T-cell (primary cell): ENCODE measurements at regions of chr7 and their contacts with region 1.

Region 1: GRCh38 chr7:130010689-130011412 is 40.3 kb downstream of the ZC3HC1 start:
- DNase-seq: peak; percentile 62 to 92 (median 80)
- ATAC-seq: peak; percentile 67 to 84 (median 75)
- H3K4me3 ChIP-seq: no peak overlapping the region
- H3K4me3 Mint-ChIP-seq: no peak overlapping the region
- H3K27ac ChIP-seq: no peak overlapping the region
- H3K27ac Mint-ChIP-seq: no peak overlapping the region
- H3K4me1 ChIP-seq: no peaks in the 10 kb centered on the region
- H3K4me1 Mint-ChIP-seq: peaks cover 2 to 5% (median 2%) of the 10 kb centered on the region in 3 donors
- H3K27me3 ChIP-seq: no peaks in the 10 kb centered on the region
- H3K27me3 Mint-ChIP-seq: no peaks in the 10 kb centered on the region

Region 2: DNA sequence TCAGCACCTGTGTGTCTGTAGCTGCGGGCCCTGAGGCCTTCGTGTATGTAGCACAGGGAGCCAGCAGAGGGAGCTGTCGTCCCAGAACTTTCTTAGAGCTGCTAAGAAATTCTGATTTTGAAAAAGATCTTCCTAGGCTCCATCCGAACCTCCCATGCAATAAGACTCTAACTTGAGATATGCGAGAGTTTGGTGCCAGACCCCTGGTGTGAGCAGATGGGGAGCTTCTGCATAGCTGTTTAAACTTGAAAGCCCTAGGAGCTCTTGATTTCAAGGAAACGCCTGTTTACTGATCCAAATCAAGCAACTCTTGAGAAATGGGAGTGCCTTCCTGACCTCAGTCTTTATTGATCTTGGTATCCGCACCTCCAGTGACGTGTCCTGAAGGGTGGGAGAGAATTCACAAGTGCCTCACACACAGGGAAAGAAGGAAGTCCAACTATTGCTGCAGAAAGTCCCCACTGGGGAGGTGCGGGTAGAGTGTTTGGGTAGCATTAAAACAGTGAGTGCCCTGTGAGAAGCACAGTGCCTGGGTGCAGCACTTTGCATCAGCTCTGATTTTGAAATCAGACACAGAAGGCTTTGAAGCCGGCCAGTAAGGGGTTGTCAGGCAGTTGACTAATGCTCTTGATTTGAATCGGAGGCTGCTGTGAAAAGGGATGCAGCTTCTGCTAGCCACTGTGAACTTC is 643.0 kb before region 1 on chr7:
- CTCF ChIA-PET with region 1: interaction called, 5 to 14 read pairs
- POLR2A ChIA-PET with region 1: interaction called in 1 of 2 experiments, 3 read pairs
- DNase-seq: peak; percentile 19 to 83 (median 65)
- ATAC-seq: peak; percentile 83 to 88 (median 86)
- H3K4me3 ChIP-seq: peak overlapping the region in 1 of 2 donors; percentile 2
- H3K4me3 Mint-ChIP-seq: peak overlapping the region; percentile 11 to 65 (median 55)
- H3K27ac ChIP-seq: no peak overlapping the region
- H3K27ac Mint-ChIP-seq: peak overlapping the region in 1 of 2 donors; percentile 12
- H3K4me1 ChIP-seq: peaks cover 4 to 11% of the 10 kb centered on the region in 2 experiments
- H3K4me1 Mint-ChIP-seq: peaks cover 13 to 22% (median 20%) of the 10 kb centered on the region in 3 donors
- H3K27me3 ChIP-seq: no peaks in the 10 kb centered on the region
- H3K27me3 Mint-ChIP-seq: no peaks in the 10 kb centered on the region

Region 3: GRCh38 chr7:129698516-129699418 is 312.1 kb before region 1 on chr7:
- CTCF ChIA-PET with region 1: no interaction called
- POLR2A ChIA-PET with region 1: interaction called in 1 of 2 experiments, 11 read pairs
- DNase-seq: no peak
- ATAC-seq: no peak
- H3K4me3 ChIP-seq: no peak overlapping the region
- H3K4me3 Mint-ChIP-seq: no peak overlapping the region
- H3K27ac ChIP-seq: no peak overlapping the region
- H3K27ac Mint-ChIP-seq: no peak overlapping the region
- H3K4me1 ChIP-seq: no peaks in the 10 kb centered on the region
- H3K4me1 Mint-ChIP-seq: peaks cover under 1 to 9% (median 2%) of the 10 kb centered on the region in 3 donors
- H3K27me3 ChIP-seq: no peaks in the 10 kb centered on the region
- H3K27me3 Mint-ChIP-seq: no peaks in the 10 kb centered on the region

Region 4: DNA sequence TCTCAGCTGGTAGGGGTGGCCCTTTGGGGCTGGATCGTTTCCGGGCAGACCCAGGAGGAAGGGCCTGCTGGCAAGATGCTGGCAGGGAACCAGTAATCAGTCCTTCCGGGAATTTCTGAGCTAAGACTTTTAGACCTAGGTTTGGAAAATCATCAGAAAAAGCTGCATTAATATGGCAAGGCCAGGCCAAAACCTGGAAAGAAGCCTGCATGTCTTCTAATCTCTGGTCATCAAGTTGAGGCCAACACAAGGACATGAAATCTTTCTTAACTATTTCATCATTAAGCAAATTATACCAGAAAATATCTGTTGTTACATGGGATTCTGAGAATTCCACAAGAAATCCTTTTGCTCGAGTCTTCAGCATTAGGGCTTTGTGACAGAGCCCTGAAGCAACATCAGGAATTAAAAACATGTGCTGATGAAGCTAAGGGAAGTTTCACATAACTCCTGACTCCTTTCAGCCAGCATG is 389.3 kb after region 1 on chr7:
- CTCF ChIA-PET with region 1: interaction called in 1 of 2 experiments, 10 read pairs
- POLR2A ChIA-PET with region 1: no interaction called
- DNase-seq: no peak
- ATAC-seq: no peak
- H3K4me3 ChIP-seq: no peak overlapping the region
- H3K4me3 Mint-ChIP-seq: no peak overlapping the region
- H3K27ac ChIP-seq: no peak overlapping the region
- H3K27ac Mint-ChIP-seq: no peak overlapping the region
- H3K4me1 ChIP-seq: peaks cover 0 to 4% of the 10 kb centered on the region in 2 experiments
- H3K4me1 Mint-ChIP-seq: peaks cover 2 to 6% (median 5%) of the 10 kb centered on the region in 3 donors
- H3K27me3 ChIP-seq: no peaks in the 10 kb centered on the region
- H3K27me3 Mint-ChIP-seq: no peaks in the 10 kb centered on the region